HEK293 (cell line): ENCODE measurements at regions of chr1 and their contacts with region 1.

Region 1: GRCh38 chr1:119275145-119276134 is 93.1 kb upstream of the HAO2 start:
- H3K4me3 ChIP-seq: no peak overlapping the region
- H3K27ac ChIP-seq: no peak overlapping the region; the same call in 1 of the 2 replicates
- H3K4me1 ChIP-seq: peaks cover 7% of the 10 kb centered on the region
- CTCF ChIP-seq: peak; percentile 58; the same call in 1 of the 2 replicates

Region 2: DNA sequence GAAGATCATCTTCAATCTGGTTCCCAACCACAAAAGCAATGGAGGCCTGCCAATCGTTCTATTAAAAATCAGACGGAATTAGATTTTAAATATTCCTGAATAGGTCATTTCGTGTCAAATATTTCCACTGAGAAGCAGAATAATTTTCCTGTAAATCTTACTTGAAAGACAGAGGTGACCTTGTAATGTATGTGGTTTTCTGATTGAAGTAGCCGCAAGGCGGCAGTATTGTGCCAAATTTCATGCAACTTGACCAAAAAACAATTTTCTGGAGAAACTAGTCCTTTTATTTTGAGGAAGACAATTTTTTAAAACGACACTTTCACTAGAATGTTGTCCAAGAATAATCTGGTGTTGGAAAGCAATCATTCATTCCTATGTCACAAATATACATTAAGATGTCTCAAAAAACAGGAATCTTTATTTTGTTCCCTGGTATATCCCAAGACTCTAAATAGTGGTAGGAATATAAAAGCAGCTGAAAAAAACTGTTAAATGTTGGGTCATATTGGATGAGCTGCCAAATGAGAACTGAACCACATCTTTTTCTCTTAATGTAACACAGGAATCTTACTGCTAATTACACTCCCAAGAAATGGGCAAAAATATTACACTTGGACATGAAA is 1124.0 kb before region 1 on chr1:
- CTCF ChIA-PET with region 1: interaction called, 10 read pairs
- POLR2A ChIA-PET with region 1: no interaction called
- H3K4me3 ChIP-seq: no peak overlapping the region
- H3K27ac ChIP-seq: no peak overlapping the region
- H3K4me1 ChIP-seq: no peaks in the 10 kb centered on the region
- CTCF ChIP-seq: peak; percentile 51; the same call in 1 of the 2 replicates

Region 3: DNA sequence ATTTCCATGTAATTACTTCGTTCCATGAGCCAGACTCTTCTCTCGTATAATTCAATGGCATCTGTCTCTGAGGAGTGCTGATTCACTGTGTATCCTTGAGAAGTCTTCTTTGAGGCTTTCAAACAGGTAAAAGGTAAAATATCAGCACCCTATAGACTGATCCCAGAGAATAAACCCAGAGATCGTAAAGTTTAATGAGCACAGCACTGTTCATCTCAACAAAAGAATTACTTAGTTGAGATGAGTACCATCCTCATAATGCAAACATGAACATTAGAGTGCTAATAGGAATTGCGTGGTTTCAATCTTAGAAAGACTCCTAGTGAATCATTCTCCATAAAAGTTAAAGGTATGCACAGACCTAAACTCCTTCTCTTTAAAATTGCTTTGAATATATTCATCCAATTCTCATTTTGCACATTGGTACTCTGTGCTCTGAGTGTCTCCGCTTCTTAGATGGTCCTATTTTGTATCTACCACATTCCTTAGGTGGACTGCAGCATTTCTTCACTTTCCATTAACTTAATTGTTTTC is 384.5 kb before region 1 on chr1:
- CTCF ChIA-PET with region 1: no interaction called
- POLR2A ChIA-PET with region 1: no interaction called
- H3K4me3 ChIP-seq: no peak overlapping the region
- H3K27ac ChIP-seq: no peak overlapping the region
- H3K4me1 ChIP-seq: no peaks in the 10 kb centered on the region
- CTCF ChIP-seq: no peak

Region 4: GRCh38 chr1:119286587-119287181 is 11.2 kb after region 1 on chr1:
- CTCF ChIA-PET with region 1: interaction called, 26 read pairs
- POLR2A ChIA-PET with region 1: no interaction called
- H3K4me3 ChIP-seq: no peak overlapping the region
- H3K27ac ChIP-seq: no peak overlapping the region
- H3K4me1 ChIP-seq: no peaks in the 10 kb centered on the region
- CTCF ChIP-seq: no peak

Region 5: GRCh38 chr1:119294722-119295121 is 19.3 kb after region 1 on chr1:
- CTCF ChIA-PET with region 1: interaction called, 21 read pairs
- POLR2A ChIA-PET with region 1: no interaction called
- H3K4me3 ChIP-seq: no peak overlapping the region
- H3K27ac ChIP-seq: no peak overlapping the region
- H3K4me1 ChIP-seq: no peaks in the 10 kb centered on the region; the same call in none of the 2 replicates
- CTCF ChIP-seq: no peak

Region 6: GRCh38 chr1:119347858-119348257 is 72.4 kb after region 1 on chr1:
- CTCF ChIA-PET with region 1: interaction called, 14 read pairs
- POLR2A ChIA-PET with region 1: no interaction called
- H3K4me3 ChIP-seq: no peak overlapping the region
- H3K27ac ChIP-seq: no peak overlapping the region
- H3K4me1 ChIP-seq: no peaks in the 10 kb centered on the region
- CTCF ChIP-seq: no peak

Region 7: DNA sequence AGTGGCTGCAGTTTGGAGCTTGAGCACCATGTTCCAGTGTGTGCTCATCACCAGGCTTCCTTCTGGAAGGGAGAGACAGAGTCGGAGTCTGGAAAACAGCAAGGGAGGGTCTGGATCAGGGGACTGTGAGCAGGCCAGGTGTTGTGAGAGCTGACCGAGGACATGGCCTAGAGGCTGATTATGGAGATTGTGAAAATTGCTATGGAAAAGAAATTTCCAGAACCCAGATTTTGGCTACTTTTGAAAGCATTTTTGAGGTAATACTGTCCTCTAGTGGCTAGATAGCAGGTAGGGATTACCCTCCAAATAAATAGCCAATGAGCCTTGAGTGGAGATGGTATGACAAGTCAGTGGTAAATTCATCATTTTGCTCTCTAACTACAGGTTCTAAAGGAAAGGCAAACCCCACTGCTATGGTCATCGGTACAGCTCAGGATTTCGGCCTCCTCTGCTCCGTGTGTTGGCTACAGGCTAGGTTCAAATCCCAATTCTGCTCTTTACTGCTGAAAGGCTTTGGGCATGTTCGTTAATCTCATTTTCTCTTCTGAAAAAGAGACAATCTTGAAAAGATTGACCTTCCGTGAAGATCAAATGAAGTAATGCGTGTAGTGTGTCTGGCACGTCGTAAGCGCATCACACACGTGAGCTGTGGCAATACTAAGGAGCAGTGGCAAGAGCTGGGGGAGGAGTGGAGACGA is 92.1 kb after region 1 on chr1:
- CTCF ChIA-PET with region 1: interaction called, 49 read pairs
- POLR2A ChIA-PET with region 1: no interaction called
- H3K4me3 ChIP-seq: no peak overlapping the region
- H3K27ac ChIP-seq: no peak overlapping the region
- H3K4me1 ChIP-seq: 0 out of 2 replicates have a peak, but pooled peaks cover 3% of the 10 kb centered on the region
- CTCF ChIP-seq: peak; percentile 85